Spleen (tissue), 13 donors: ENCODE measurements at regions of chr10 and their contacts with region 1.

Region 1: DNA sequence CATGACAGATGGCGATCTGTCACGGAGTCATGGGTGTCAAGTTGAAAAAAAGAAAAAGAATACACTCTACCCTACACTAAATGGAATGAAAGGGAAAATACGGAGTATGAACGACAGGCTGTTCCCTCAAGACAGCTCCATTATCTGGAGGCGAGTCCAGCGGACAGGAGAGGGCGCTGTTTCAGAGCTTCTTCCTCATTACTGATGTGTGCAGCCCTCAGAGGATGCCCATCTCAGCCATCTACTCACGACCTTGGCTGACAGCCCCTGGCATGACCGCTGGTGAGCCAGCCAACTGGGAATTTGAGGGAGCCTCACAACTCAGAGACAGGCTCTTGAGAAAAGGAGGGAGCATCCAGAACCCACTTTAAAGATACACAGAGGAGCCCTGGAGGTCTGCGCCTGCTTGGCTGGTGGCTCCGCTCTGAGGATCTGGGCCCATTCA is 49.6 kb upstream of the SMNDC1 start:
- DNase-seq: peak; percentile 93
- H3K4me3 ChIP-seq: no peak overlapping the region
- H3K27ac ChIP-seq: peak overlapping the region in 4 of 8 donors; percentile 77 to 88 (median 82)
- H3K4me1 ChIP-seq: peaks cover 20 to 67% (median 52%) of the 10 kb centered on the region in 6 donors
- H3K27me3 ChIP-seq: no peaks in the 10 kb centered on the region
- CTCF ChIP-seq: peak; percentile 47 to 88 (median 83)
- POLR2A ChIP-seq: no peak

Region 2: DNA sequence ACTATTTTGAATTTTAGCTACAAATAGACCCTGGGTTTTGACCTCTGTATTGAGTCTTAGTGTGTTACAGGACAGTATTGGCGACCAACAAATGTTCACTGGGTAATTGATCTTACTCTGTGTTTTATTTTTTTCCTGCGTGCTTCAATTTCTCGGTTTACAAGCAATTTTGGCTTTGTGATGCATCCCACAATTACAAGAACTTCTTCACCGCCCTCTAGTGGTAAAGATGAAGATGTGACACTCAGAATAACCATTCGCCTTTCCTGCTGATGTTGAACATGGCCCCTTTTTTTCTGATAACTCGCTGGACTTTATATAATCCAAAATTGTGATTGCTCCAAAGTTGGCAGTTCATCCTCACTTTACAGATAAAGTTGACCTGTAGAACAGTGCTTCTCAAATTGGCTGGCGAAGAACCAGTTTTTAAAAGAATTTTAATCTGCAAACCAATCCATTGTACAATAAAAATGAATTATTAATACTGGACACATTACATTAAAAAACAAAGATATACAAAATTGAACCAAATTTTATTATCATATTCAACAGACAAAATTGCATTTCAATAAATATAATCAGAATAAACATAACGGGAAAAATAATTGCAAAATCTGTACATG is 192.9 kb after region 1 on chr10:
- intact Hi-C with region 1: loop called (anchors 5 kb)
- DNase-seq: no peak
- H3K4me3 ChIP-seq: no peak overlapping the region
- H3K27ac ChIP-seq: peak overlapping the region in 4 of 8 donors; percentile 13 to 45 (median 31)
- H3K4me1 ChIP-seq: peaks cover 0 to 34% (median 10%) of the 10 kb centered on the region in 6 donors
- H3K27me3 ChIP-seq: peaks cover 0 to 9% (median 0%) of the 10 kb centered on the region in 7 donors
- CTCF ChIP-seq: peak; percentile 64 to 91 (median 83)
- POLR2A ChIP-seq: no peak